Mammary epithelial cell (primary cell): ENCODE measurements at regions of chr2 and their contacts with region 1.

Region 1: DNA sequence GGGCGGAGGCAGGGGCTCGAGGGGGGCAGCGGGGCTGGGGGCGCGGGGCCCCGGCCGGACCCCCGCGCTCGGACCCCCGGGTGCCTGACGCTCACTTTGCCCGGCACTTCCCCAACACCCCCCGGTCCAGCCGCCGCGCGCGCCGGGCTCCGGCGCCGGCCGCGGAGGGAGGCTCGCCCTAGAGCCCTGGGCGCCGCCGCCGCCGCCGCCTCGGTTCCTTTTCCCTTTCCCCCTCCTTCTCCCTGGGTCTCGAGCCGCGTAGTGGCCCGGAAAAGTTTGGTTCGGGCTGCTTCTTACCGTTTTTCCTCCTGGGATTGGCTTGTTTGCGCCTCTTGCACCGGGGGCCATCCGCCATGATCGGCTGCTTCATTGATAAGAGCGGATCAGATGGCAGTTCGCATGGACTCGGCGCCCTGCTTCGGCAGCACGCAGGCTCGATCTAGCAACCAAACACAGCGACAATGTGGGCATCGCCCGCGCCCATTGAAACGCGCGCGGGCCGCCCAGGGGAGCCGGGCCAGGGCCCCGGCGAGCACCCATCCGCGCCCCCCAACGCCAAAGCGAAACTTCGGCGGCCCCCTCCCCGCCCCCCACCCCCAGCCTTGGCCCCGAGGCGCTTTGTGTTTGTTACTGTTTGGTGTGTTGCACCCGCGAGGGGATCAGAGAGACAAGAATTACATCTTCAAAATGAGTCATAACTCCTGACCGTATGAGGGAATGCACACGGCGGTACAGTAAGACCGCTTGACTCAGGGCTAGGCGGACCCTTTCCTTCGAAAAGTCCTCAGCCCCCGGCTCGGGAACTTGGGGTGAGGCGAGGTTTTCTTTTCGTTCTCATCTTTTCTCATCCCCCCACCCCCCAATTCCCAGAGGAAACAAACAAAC is 2.7 kb downstream of the ZEB2 start:
- DNase-seq: peak; percentile 68
- H3K4me3 ChIP-seq: peak overlapping the region; percentile 71 to 90 (median 74)
- H3K27ac ChIP-seq: no peak overlapping the region
- H3K4me1 ChIP-seq: peaks cover 14% of the 10 kb centered on the region
- H3K27me3 ChIP-seq: peaks cover 65% of the 10 kb centered on the region
- CTCF ChIP-seq: no peak

Region 2: DNA sequence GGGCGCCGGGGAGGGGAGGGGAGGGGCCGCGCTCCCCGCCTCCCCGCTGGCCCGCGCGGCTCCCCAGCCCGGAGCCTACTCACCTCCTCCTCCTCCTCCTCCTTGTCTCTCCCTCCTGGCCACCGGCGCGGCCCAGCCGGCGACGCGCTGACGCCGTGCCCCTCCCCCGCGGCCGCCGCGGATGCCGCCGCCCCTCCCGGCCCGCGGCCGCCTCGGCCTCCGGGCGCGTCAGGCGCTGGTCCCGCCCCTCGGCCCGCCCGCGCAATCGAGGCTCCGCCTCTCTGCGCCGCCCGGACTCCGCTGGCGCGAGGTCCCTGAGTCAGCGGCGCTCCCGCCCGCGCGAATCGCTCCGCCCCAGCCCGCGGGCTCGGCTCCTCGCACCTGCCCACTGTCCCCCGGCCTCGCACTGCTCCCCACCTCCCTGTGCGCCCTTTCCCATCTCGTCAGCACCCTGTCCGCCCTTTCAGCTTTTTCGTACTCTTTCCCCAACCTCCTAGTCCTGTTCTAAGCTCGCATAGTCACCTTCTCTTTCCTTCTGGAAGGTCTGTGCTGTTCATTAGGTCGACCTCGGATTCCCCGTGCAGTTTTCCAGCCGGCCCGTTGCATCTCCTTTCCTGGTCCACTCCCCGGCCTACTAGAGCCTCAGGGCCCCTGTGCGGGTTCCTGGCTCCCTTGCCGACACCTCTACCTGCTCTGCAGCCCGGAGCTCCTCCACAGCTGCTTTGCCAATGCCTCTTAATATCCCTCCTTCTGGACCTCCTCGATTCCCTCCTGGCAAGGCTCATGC is 184.7 kb before region 1 on chr2:
- CTCF ChIA-PET with region 1: no interaction called
- dilution Hi-C with region 1: no loop called
- in situ Hi-C with region 1: no loop called
- intact Hi-C with region 1: loop called (anchors 5 kb)
- DNase-seq: peak; percentile 85
- H3K4me3 ChIP-seq: peak overlapping the region; percentile 49 to 91 (median 77)
- H3K27ac ChIP-seq: peak overlapping the region; percentile 73
- H3K4me1 ChIP-seq: peaks cover 10% of the 10 kb centered on the region
- H3K27me3 ChIP-seq: no peaks in the 10 kb centered on the region
- CTCF ChIP-seq: no peak

Region 3: DNA sequence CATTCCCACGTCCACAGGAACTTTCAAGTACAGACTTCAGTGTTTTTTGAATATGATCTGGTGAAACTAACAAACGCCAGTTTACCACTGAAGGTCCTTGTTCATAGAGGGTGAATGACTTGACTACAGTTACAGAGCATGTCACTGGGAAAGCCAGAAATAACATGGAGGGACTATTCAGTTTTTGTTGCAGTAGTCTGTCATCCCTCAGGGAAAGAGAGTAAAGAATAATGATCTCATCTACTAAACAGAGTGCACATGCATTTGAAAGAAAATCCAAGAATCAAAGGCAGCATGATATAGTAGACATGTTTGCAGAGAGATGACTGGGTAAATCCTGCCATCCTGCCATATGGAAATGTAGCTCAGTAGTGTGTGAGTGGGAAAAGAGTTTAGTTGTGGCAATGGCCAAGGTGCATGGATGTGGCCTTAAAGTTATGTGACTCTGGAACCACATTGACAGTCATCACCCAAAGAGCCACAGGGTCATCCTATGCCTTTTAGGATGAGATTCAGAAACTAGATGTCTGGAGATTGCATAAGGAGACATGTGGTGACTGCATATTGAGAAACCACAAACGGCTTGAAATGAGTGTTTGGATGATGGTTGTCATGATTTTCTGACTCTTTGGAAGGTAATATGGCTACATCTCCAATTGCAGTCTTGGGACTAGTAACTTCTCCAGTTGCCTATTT is 128.0 kb after region 1 on chr2:
- CTCF ChIA-PET with region 1: no interaction called
- dilution Hi-C with region 1: no loop called
- in situ Hi-C with region 1: no loop called
- intact Hi-C with region 1: no loop called
- DNase-seq: peak; percentile 10
- H3K4me3 ChIP-seq: no peak overlapping the region
- H3K27ac ChIP-seq: no peak overlapping the region
- H3K4me1 ChIP-seq: no peaks in the 10 kb centered on the region
- H3K27me3 ChIP-seq: no peaks in the 10 kb centered on the region
- CTCF ChIP-seq: no peak